Activated CD4-positive, alpha-beta T cell treated with anti-CD3 and anti-CD28 coated beads, Interleukin-2, amount 10 ng/mL, durations not matched to agents 24 days and 14 days (primary cell): ENCODE measurements at regions of chr14 and their contacts with region 1.

Region 1: DNA sequence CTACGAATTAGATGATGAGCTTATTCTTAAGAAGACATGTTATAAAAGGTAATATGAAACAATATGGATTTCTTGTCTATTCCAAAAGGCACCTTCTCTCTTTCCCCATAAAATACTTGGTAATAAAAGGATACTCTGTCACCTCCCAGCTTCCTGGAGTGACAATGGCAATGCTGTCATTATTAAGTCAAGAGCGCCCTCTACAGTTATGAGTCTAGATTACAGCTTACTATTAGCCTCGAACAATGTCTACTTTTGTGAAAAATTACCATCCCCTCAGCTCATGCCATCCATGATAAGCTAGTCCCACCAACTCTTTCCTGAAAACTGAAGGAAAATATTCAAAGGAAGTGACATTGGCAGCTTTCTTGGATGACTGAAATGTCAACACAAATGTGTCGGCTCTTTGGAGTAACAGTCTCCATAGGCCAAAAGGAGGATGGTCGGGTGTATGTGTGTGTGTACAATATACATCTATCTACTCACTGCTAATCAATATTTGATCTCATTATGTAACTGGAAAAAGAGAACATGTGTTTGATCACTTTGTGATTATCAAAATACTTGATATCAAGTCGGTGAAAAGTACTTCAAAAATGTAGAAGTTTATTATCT is 48.7 kb upstream of the CDKN3 start:
- DNase-seq: peak; percentile 71
- H3K4me3 Mint-ChIP-seq: no peak overlapping the region
- H3K27ac Mint-ChIP-seq: no peak overlapping the region
- H3K4me1 Mint-ChIP-seq: peaks cover 2% of the 10 kb centered on the region
- H3K27me3 Mint-ChIP-seq: peaks cover 18% of the 10 kb centered on the region

Region 2: GRCh38 chr14:53295985-53296582 is 1052.0 kb before region 1 on chr14:
- intact Hi-C with region 1: loop called (anchors 5 kb)
- DNase-seq: peak; percentile 75
- H3K4me3 Mint-ChIP-seq: no peak overlapping the region
- H3K27ac Mint-ChIP-seq: no peak overlapping the region
- H3K4me1 Mint-ChIP-seq: no peaks in the 10 kb centered on the region
- H3K27me3 Mint-ChIP-seq: no peaks in the 10 kb centered on the region

Region 3: GRCh38 chr14:53432378-53432802 is 915.7 kb before region 1 on chr14:
- intact Hi-C with region 1: loop called (anchors 5 kb)
- DNase-seq: peak; percentile 58
- H3K4me3 Mint-ChIP-seq: no peak overlapping the region
- H3K27ac Mint-ChIP-seq: no peak overlapping the region
- H3K4me1 Mint-ChIP-seq: no peaks in the 10 kb centered on the region
- H3K27me3 Mint-ChIP-seq: peaks cover 3% of the 10 kb centered on the region